CD8-positive, alpha-beta T cell (primary cell): ENCODE measurements at regions of chr17 and their contacts with region 1.

Region 1: GRCh38 chr17:80732268-80732667 is 187.6 kb downstream of the RPTOR start:
- DNase-seq: no peak
- ATAC-seq: no peak
- H3K4me3 ChIP-seq: no peak overlapping the region
- H3K4me3 Mint-ChIP-seq: no peak overlapping the region
- H3K27ac ChIP-seq: peak overlapping the region in 1 of 2 experiments; percentile 70
- H3K27ac Mint-ChIP-seq: peak overlapping the region; percentile 67
- H3K4me1 ChIP-seq: peaks cover 20% of the 10 kb centered on the region
- H3K4me1 Mint-ChIP-seq: peaks cover 48% of the 10 kb centered on the region
- H3K27me3 ChIP-seq: no peaks in the 10 kb centered on the region
- H3K27me3 Mint-ChIP-seq: no peaks in the 10 kb centered on the region
- CTCF ChIP-seq: no peak

Region 2: GRCh38 chr17:80260069-80260554 is 472.2 kb before region 1 on chr17:
- CTCF ChIA-PET with region 1: no interaction called
- POLR2A ChIA-PET with region 1: no interaction called
- intact Hi-C with region 1: no loop called
- DNase-seq: peak; percentile 50 to 93 (median 81)
- ATAC-seq: peak; percentile 63
- H3K4me3 ChIP-seq: peak overlapping the region; percentile 55 to 61
- H3K4me3 Mint-ChIP-seq: peak overlapping the region; percentile 87
- H3K27ac ChIP-seq: peak overlapping the region; percentile 74 to 79
- H3K27ac Mint-ChIP-seq: peak overlapping the region; percentile 97
- H3K4me1 ChIP-seq: peaks cover 29% of the 10 kb centered on the region
- H3K4me1 Mint-ChIP-seq: peaks cover 38% of the 10 kb centered on the region
- H3K27me3 ChIP-seq: no peaks in the 10 kb centered on the region
- H3K27me3 Mint-ChIP-seq: no peaks in the 10 kb centered on the region
- CTCF ChIP-seq: no peak

Region 3: GRCh38 chr17:80773243-80773991 is 41.1 kb after region 1 on chr17:
- CTCF ChIA-PET with region 1: interaction called, 3 read pairs
- POLR2A ChIA-PET with region 1: no interaction called
- intact Hi-C with region 1: loop called (anchors 5 kb)
- DNase-seq: peak in 2 of 9 experiments; percentile 56 to 59
- ATAC-seq: peak; percentile 81
- H3K4me3 ChIP-seq: no peak overlapping the region
- H3K4me3 Mint-ChIP-seq: peak overlapping the region; percentile 75
- H3K27ac ChIP-seq: no peak overlapping the region
- H3K27ac Mint-ChIP-seq: peak overlapping the region; percentile 95
- H3K4me1 ChIP-seq: peaks cover 31% of the 10 kb centered on the region
- H3K4me1 Mint-ChIP-seq: peaks cover 61% of the 10 kb centered on the region
- H3K27me3 ChIP-seq: no peaks in the 10 kb centered on the region
- H3K27me3 Mint-ChIP-seq: no peaks in the 10 kb centered on the region
- CTCF ChIP-seq: no peak

Region 4: GRCh38 chr17:80805032-80805751 is 72.9 kb after region 1 on chr17:
- CTCF ChIA-PET with region 1: no interaction called
- POLR2A ChIA-PET with region 1: no interaction called
- intact Hi-C with region 1: no loop called
- DNase-seq: no peak
- ATAC-seq: no peak
- H3K4me3 ChIP-seq: no peak overlapping the region
- H3K4me3 Mint-ChIP-seq: no peak overlapping the region
- H3K27ac ChIP-seq: no peak overlapping the region
- H3K27ac Mint-ChIP-seq: no peak overlapping the region
- H3K4me1 ChIP-seq: no peaks in the 10 kb centered on the region
- H3K4me1 Mint-ChIP-seq: no peaks in the 10 kb centered on the region
- H3K27me3 ChIP-seq: no peaks in the 10 kb centered on the region
- H3K27me3 Mint-ChIP-seq: no peaks in the 10 kb centered on the region
- CTCF ChIP-seq: no peak